Calu3 (cell line): ENCODE measurements at regions of chr12 and their contacts with region 1.

Region 1: GRCh38 chr12:122860346-122861090 is 25.3 kb downstream of the HIP1R start:
- DNase-seq: peak; percentile 89
- H3K4me3 Mint-ChIP-seq: no peak overlapping the region
- H3K27ac Mint-ChIP-seq: peak overlapping the region; percentile 30
- H3K4me1 Mint-ChIP-seq: peaks cover 7% of the 10 kb centered on the region
- H3K27me3 Mint-ChIP-seq: no peaks in the 10 kb centered on the region
- CTCF ChIP-seq: peak; percentile 91

Region 2: DNA sequence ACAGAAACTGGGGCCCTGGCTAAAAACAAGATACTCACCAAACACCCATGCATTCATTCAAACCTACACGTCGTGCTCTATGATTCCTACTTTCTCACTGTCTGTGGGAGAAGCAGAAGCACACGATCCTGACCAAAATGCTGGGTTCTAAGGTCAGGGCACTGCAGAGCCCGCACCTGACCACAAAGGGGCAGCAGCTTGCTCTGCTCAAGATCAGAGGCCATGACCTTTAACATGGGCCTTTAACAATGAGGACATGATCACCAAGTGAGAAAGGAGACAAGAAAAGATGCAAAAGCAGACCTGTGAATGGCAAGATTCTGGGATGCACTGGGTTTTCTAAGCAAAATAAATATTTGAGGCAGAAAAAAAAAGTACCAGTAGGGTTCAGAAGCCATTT is 554.1 kb before region 1 on chr12:
- CTCF ChIA-PET with region 1: no interaction called
- intact Hi-C with region 1: no loop called
- DNase-seq: no peak
- H3K4me3 Mint-ChIP-seq: no peak overlapping the region
- H3K27ac Mint-ChIP-seq: no peak overlapping the region
- H3K4me1 Mint-ChIP-seq: no peaks in the 10 kb centered on the region
- H3K27me3 Mint-ChIP-seq: no peaks in the 10 kb centered on the region
- CTCF ChIP-seq: no peak

Region 3: DNA sequence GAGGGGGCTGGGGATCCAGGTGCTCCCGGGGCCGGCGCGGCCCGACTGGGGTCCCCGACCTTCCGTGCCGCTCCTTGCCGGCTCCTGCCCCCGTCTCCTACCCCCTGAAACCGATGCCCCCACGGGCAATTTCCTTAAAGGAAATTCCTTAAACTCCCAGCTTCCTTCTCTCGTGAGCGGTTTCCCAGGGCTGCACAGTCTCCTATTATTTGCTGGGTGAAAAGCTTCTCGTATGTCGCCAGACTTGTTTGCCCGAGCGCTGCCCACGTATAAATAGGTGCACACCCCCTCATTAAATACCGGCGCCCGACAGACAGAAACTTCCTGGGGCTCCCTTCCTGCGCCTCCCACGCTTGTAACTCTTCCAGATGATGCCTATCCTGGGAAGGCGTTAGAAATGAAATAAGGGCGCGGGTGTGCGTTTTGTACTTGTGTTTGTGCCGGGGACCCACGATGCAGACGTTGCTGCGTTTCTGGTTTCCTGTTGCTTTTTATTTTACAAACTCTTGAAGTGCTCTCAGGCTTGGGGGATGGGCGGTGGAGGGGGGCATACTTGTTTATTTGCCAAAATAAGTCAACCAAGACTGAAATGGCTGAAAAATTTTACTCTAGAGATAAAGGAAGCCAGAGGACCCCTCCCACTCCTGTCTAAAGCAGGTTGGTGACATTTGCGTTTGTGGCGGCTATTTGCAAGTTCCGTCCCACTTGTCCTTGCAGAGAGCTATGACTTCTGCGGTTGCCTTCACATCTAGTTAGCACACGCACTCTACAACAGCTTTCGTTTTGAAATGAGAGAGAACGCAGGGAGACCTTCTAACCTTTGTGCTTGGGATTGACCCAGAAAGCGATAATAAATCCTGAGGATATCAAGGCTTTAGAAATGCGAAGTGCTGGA is 24.2 kb before region 1 on chr12:
- CTCF ChIA-PET with region 1: interaction called, 12 read pairs
- intact Hi-C with region 1: no loop called
- DNase-seq: peak; percentile 60
- H3K4me3 Mint-ChIP-seq: peak overlapping the region; percentile 85
- H3K27ac Mint-ChIP-seq: peak overlapping the region; percentile 74
- H3K4me1 Mint-ChIP-seq: peaks cover 56% of the 10 kb centered on the region
- H3K27me3 Mint-ChIP-seq: no peaks in the 10 kb centered on the region
- CTCF ChIP-seq: no peak